K562 (cell line): ENCODE measurements at regions of chr22 and their contacts with region 1.

Region 1: DNA sequence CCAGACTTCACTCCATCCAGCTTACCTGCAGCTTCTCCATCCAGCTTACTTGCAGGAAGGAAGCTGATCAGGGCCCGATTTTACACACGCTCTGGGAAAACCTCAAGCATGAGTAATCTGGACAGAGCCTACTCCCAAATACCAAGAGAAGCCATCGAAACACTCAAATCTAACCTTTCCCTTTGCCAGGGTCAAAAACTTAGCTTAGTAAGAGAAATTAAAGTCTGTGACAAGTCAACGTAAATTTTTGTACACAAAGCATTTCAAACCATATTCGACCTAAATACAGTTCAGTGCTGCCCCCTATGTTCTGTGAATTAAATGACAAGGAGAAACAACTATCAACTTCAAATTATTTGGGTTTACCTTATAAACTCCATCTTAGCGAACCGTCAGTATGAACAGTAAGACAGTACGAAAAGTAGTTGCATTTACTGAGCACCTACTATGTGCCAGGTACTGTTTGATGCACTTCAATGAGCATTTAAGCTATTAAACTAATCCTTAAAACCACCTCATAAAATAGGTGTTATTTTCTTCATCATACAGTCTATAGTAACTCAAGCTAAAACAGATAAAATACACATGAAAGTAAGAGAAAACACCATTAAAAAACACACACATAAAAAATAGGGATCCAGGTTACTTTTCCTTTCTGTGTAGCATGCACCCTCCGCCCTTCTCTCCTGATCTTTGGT is 36.9 kb downstream of the ARFGAP3 start:
- DNase-seq: peak; percentile 15 to 37 (median 23)
- ATAC-seq: no peak
- H3K4me3 ChIP-seq: no peak overlapping the region
- H3K27ac ChIP-seq: no peak overlapping the region
- H3K4me1 ChIP-seq: no peaks in the 10 kb centered on the region
- H3K27me3 ChIP-seq: no peaks in the 10 kb centered on the region
- CTCF ChIP-seq: peak; percentile 30 to 71 (median 51); a peak in 5 of 6 replicates
- EP300 ChIP-seq: no peak
- POLR2A ChIP-seq: no peak
- RAD21 ChIP-seq: peak; percentile 43 to 54

Region 2: DNA sequence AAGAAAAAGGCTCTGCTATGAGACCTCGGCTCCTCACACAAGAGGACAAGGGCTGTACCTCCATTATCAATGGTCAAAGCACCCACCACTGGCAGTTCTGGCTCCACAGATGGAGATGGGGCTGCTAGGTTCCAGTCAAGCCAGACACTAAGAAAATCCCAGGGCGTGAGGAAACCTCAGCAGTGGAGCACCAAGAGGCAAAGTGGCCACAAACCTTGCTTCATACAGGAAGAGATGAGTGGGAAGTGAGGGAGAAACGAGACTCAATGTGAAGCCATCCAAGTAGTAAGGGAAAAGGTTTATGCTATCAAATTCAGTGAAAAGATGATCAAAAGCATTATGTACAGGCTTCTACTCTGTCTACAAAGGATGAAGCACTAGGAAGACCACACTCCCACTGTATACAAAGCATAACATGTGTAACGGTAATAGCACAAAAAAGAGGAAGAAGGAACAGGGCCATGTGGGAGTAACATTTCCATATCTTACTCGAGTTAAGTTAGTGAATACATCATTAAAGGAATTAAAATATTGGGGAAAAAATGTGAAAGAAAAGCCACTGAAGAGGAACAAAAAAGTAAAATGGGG is 232.5 kb before region 1 on chr22:
- CTCF ChIA-PET with region 1: no interaction called
- POLR2A ChIA-PET with region 1: no interaction called
- in situ Hi-C with region 1: no loop called
- intact Hi-C with region 1: no loop called
- DNase-seq: no peak
- ATAC-seq: no peak
- H3K4me3 ChIP-seq: no peak overlapping the region
- H3K27ac ChIP-seq: no peak overlapping the region
- H3K4me1 ChIP-seq: no peaks in the 10 kb centered on the region
- H3K27me3 ChIP-seq: no peaks in the 10 kb centered on the region
- CTCF ChIP-seq: no peak
- EP300 ChIP-seq: no peak
- POLR2A ChIP-seq: no peak
- RAD21 ChIP-seq: no peak

Region 3: GRCh38 chr22:42662114-42663021 is 157.8 kb before region 1 on chr22:
- CTCF ChIA-PET with region 1: no interaction called
- POLR2A ChIA-PET with region 1: no interaction called
- in situ Hi-C with region 1: no loop called
- intact Hi-C with region 1: loop called (anchors 2 kb)
- DNase-seq: peak; percentile 74 to 77 (median 75)
- ATAC-seq: peak; percentile 96
- H3K4me3 ChIP-seq: peak overlapping the region; percentile 32
- H3K27ac ChIP-seq: no peak overlapping the region
- H3K4me1 ChIP-seq: peaks cover 0 to 11% of the 10 kb centered on the region in 2 experiments; a peak in 2 of 5 replicates
- H3K27me3 ChIP-seq: peaks cover 0 to 8% of the 10 kb centered on the region in 2 experiments; a peak in 2 of 5 replicates
- CTCF ChIP-seq: peak; percentile 73 to 78 (median 76)
- EP300 ChIP-seq: no peak
- POLR2A ChIP-seq: peak; percentile 52; the same call in 1 of the 2 replicates
- RAD21 ChIP-seq: peak; percentile 56 to 76